ENCODE measurements at regions of chr2 and their contacts with region 1.

Region 1: DNA sequence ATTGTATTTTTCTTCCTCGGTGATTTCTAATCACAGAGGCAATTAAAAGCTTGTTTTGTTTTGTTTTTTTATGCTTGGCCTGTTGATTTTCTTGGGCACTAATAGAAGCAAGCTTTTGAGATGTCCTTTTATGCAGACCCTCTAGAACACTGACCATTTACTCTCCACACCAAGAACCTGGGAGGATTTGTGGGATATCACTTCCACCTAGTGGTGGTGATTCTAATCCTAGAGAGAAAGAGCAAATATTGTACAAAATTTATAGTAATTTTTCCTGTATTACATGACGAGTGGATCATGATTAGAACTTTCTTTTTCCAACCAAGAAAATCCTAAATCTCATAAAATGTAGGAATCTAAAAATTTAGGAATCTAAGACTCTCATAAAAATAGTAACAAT is 23.4 kb downstream of the NEMP2 start:
- DNase-seq: no peak
- ATAC-seq: no peak
- H3K4me3 Mint-ChIP-seq: no peak overlapping the region
- H3K27ac Mint-ChIP-seq: no peak overlapping the region
- H3K4me1 Mint-ChIP-seq: peaks cover 24% of the 10 kb centered on the region
- H3K27me3 Mint-ChIP-seq: no peaks in the 10 kb centered on the region

Region 2: DNA sequence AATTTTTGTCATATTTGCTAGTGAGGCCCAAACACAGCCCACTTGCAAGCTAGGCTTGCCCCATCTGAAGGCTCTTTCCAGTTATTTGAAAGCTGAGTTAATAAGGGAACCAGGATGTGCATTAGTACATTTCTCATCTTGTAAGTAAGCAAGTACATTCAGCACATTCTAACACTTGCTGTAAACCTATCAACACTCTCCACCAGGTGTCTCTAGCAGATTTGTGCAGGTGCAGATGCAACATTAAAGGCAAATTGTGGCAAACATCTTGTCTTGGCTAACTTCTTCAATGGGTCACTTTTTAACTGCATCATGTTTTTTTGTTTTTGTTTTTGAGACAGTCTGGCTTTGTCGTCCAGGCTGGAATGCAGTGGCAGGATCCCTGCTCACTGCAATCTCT is 128.3 kb before region 1 on chr2:
- CTCF ChIA-PET with region 1: interaction called, 4 read pairs
- POLR2A ChIA-PET with region 1: no interaction called
- intact Hi-C with region 1: loop called (anchors 2 kb)
- DNase-seq: peak; percentile 36
- ATAC-seq: peak; percentile 88
- H3K4me3 Mint-ChIP-seq: no peak overlapping the region
- H3K27ac Mint-ChIP-seq: no peak overlapping the region
- H3K4me1 Mint-ChIP-seq: no peaks in the 10 kb centered on the region
- H3K27me3 Mint-ChIP-seq: no peaks in the 10 kb centered on the region